Cardiac septum (tissue), 1 donor: ENCODE measurements at regions of chr3 and their contacts with region 1.

Region 1: DNA sequence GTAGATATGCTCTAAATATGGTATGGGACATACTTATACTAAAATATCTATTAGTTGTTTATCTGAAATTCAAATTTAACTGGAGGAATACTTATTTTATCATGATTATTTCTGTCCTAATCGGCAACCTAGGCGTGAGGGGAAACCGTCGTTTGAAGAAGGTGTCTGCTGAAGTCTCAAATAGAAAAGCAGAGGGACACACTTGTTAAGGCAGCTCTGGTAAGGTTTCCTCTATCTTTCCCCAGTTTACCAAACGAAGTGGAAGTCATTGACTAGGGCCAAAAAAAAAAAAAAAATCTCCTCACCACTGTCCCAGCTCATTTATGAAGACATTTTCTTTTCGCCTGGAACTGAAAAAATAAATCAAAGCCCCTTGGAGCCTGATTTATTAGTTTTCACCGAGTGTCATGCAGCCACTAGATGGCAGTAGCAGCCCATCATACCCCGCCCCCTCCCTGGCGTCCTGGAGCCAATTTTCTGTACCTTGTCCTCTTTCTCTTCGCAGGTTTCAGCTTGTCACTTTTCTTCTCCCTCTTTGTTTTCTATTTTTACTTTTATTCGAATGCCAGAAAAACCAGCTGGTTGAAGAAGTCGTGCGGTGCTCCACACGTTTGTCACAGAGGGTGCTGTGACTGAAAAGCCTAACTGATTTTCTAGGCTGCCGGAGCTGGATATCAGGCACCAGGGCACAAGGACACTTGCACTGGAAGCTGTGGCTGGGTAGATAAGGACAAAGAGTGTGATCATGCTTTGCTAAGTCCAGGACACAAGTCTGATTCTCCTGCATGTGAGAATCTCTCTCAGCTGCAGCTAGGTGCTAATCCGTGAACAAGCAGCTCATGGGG is 238.7 kb downstream of the ZPLD1 start:
- DNase-seq: peak; percentile 75

Region 2: GRCh38 chr3:102741108-102741507 is 67.6 kb after region 1 on chr3:
- intact Hi-C with region 1: loop called (anchors 5 kb)
- DNase-seq: no peak